Heart left ventricle (tissue), 16 donors: ENCODE measurements at regions of chr5 and their contacts with region 1.

Region 1: GRCh38 chr5:101574017-101574416 is 670.9 kb upstream of the ST8SIA4 start:
- DNase-seq: no peak
- ATAC-seq: no peak
- H3K4me3 ChIP-seq: no peak overlapping the region
- H3K27ac ChIP-seq: no peak overlapping the region
- H3K4me1 ChIP-seq: no peaks in the 10 kb centered on the region
- H3K27me3 ChIP-seq: no peaks in the 10 kb centered on the region
- CTCF ChIP-seq: no peak
- POLR2A ChIP-seq: no peak

Region 2: DNA sequence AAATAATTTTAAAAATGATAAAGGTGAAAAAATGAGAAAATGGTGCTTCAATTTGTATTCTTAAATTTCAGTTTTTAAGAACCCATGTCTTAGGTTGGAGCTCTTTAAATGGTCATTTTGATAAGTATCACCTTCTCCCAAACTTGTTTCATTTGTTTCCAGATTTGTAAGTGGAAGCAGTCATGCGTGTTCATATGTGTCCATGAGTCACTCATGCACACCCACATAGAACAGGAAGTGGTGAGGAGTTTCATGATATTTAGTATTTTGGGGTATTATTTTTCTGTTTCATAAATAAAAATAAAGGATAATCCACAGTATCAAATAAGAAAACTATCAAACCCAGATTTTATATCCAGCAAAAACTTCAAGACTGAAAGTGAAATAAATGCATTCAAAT is 100.5 kb before region 1 on chr5:
- intact Hi-C with region 1: loop called in 1 of 10 experiments (anchors 2 kb)
- DNase-seq: no peak
- ATAC-seq: no peak
- H3K4me3 ChIP-seq: no peak overlapping the region
- H3K27ac ChIP-seq: no peak overlapping the region
- H3K4me1 ChIP-seq: no peaks in the 10 kb centered on the region
- H3K27me3 ChIP-seq: no peaks in the 10 kb centered on the region
- CTCF ChIP-seq: no peak
- POLR2A ChIP-seq: no peak